Right ventricle myocardium superior (tissue), 1 donor: ENCODE measurements at regions of chr5 and their contacts with region 1.

Region 1: DNA sequence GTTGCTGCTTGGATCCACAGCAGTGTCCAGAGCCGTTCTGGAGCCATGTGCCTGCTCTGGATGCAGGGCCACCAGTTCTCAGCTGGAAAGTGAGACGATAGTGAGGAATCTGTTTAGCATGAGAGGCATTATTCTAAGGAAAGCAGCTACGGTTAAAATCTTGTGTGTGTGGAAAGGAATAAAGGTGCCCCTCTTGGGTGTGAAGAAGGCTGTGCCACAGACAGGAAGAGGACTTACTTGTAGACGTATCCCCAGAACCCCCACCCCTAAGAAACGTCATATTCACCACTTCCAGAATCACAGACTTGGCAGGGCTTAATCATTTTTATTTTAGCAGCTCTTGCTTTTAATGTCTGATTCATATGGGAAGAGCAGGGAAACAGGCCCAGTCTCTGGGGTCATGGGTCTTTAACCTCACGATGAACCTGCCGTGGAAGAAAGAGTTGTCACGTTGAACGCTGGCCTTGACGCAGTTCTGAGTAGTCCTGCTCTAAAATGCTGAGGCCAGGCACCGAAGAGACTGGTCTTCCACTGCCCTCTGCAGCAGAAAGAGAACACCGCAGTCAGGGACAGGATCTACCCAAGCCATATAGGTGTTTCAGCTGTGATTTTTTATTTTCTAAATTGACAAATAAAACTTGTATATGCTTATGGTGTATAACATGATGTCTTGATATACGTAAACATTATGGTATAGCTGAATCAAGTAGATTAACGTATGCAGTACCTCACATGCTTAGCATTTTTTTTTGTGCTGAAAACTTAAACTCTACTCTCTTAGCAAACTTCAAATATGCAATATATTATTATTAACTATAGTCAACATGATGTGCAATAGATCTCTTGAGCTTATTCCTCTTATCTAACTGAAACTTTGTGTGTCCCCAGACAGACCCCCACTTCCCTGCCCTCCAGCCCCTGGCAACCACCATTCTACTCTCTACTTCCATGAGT is 38.8 kb downstream of the CARTPT start:
- DNase-seq: peak; percentile 52
- ATAC-seq: peak; percentile 99

Region 2: DNA sequence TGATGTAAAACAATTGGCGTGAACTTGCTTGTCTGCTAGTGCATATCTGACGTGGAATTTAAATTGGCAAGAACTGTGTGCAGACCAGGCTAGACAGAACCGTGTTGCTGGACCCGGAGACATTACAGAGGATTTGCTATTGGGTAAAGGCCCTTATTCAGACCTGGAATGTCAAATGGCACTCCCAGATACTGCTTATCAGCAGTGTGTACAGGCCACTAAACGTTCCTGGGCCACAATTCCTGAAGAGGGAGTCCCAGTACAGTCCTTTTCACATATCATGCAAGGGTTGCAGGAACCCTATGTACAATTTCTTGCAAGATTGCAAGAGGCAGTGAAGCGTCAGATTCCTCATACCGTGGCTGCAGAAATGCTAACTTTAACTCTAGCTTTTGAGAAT is 184.3 kb before region 1 on chr5:
- intact Hi-C with region 1: loop called (anchors 5 kb)
- DNase-seq: no peak
- ATAC-seq: peak; percentile 85

Region 3: GRCh38 chr5:71658916-71659662 is 98.8 kb before region 1 on chr5:
- intact Hi-C with region 1: no loop called
- DNase-seq: no peak
- ATAC-seq: no peak